Calu3 (cell line): ENCODE measurements at regions of chr2 and their contacts with region 1.

Region 1: DNA sequence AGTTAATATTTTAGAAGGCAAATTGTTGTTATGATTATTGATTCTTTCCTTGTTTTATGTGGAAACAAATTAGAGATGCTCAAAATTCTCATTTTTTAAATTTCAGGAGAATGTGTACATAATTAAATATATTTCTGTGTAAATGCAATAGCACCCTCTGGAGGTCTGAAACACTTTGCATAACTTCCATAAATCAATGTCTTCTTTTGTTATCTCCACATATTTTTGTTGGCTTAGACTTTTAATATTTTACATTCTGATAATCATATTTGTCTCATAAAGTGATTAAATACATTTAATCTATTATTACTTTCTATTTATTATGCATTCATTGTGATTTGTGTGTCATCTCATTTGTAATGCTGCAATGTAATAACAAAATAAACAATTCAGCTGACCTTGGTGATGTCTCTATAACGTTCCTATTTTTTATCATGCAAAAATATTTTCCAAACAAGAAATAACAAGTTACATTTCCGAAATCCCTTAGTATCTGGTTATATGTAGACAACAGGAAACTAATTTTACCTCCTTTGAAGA is 201.8 kb upstream of the GALNT5 start:
- DNase-seq: peak; percentile 5
- H3K4me3 Mint-ChIP-seq: no peak overlapping the region
- H3K27ac Mint-ChIP-seq: peak overlapping the region; percentile 45
- H3K4me1 Mint-ChIP-seq: peaks cover 23% of the 10 kb centered on the region
- H3K27me3 Mint-ChIP-seq: no peaks in the 10 kb centered on the region
- CTCF ChIP-seq: peak; percentile 45

Region 2: DNA sequence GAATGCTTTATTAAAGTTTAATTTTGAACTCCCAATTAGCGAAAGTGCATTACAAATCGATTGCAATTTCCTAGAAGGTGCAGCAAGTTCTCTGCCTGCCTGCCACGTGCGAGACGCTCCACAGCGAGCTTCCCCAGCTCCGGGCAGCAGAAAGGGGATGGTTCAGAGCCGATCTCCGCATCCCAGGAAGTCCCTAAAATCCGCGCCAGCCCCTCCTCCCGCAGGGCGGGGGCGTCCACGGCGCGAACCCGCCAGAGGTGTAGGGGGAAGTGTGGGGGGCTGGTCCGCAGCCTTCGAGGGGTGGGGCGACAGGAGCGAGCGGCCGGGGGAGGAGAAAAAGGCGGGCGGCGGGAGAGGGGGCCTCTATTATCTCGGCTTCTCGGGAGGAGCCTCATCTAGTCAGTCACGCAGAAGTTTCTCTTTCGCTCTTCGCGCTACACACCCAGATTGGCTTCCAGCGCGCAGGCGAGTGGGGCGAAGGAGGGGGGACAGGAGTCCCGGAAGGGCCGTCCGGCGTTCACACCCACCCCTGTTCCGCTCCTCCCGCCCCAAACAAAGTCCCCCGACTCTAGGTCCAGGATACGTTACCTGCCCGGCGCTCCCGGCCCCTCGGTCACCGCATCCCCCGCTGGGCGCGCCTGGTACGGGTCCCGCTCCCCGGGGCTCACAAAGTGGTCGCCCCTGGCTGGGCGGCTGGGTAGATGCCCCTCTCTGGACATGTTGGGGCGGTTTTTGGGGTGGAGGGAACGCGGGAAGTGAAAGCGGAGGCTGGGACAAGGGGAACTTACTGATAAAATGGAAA is 714.1 kb before region 1 on chr2:
- CTCF ChIA-PET with region 1: no interaction called
- intact Hi-C with region 1: loop called (anchors 2 kb)
- DNase-seq: peak; percentile 90
- H3K4me3 Mint-ChIP-seq: peak overlapping the region; percentile 94
- H3K27ac Mint-ChIP-seq: peak overlapping the region; percentile 95
- H3K4me1 Mint-ChIP-seq: peaks cover 35% of the 10 kb centered on the region
- H3K27me3 Mint-ChIP-seq: no peaks in the 10 kb centered on the region
- CTCF ChIP-seq: no peak

Region 3: DNA sequence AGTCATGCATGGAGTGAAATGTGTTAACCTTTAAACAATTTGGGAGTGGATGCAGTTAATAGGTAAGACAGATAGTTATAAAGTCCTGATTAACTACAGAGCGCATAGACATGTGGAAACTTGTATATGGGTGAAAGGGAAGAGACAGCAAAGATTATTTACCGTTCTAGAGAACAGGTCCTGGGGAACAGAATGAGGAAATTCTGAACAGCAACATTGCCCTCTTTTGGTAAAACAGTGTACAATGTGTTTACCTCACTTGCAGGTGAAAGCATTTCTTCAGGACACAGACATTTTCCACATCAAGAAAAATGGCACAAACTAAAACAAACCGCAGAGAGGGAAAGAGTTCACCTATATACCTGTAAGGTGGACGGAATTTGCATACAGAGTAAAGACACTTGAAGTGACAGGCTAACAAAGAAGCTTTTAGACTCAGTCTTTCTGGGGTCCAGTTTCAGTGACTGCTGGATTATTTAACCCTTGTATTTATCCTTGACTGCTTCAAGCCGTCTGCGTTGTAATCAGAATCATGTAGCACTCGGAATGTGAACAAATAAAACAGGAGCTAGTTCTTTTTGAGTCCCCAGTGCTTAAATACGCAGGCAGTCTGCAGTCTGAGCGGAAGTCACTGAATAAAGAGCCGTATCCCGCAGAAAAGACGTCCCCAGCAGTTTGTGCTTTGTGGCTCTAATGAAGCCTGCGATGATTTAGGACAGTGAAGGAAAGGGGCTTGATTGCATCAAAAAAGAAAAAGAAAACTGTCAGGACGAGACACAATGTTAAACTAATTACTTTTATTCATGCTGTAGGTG is 163.1 kb before region 1 on chr2:
- CTCF ChIA-PET with region 1: no interaction called
- intact Hi-C with region 1: loop called (anchors 1 kb)
- DNase-seq: peak; percentile 23
- H3K4me3 Mint-ChIP-seq: peak overlapping the region; percentile 67
- H3K27ac Mint-ChIP-seq: peak overlapping the region; percentile 29
- H3K4me1 Mint-ChIP-seq: peaks cover 20% of the 10 kb centered on the region
- H3K27me3 Mint-ChIP-seq: no peaks in the 10 kb centered on the region
- CTCF ChIP-seq: peak; percentile 18

Region 4: DNA sequence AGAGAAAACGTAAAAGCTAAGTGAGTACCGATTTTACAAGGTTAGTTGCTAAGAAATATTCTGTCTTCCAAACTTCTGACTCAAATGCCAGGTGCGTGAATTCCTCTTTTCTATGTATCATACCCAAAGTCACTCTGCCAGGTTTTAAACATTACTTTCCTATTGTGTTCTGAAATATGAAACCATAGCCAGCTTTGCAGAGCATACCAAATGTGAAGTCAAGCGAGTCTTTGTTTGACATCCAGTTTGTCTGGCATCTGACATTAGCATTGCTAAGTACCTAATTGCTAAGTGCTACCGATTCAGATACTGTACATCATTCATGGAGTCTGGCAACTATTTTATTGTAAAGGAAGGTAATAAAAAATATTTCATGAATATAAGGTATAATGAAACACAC is 120.1 kb before region 1 on chr2:
- CTCF ChIA-PET with region 1: no interaction called
- intact Hi-C with region 1: loop called (anchors 10 kb)
- DNase-seq: peak; percentile 28
- H3K4me3 Mint-ChIP-seq: no peak overlapping the region
- H3K27ac Mint-ChIP-seq: no peak overlapping the region
- H3K4me1 Mint-ChIP-seq: peaks cover 18% of the 10 kb centered on the region
- H3K27me3 Mint-ChIP-seq: no peaks in the 10 kb centered on the region
- CTCF ChIP-seq: no peak

Region 5: GRCh38 chr2:157194097-157194688 is 138.5 kb after region 1 on chr2:
- CTCF ChIA-PET with region 1: interaction called, 9 read pairs
- intact Hi-C with region 1: loop called (anchors 2 kb)
- DNase-seq: peak; percentile 28
- H3K4me3 Mint-ChIP-seq: no peak overlapping the region
- H3K27ac Mint-ChIP-seq: peak overlapping the region; percentile 77
- H3K4me1 Mint-ChIP-seq: peaks cover 16% of the 10 kb centered on the region
- H3K27me3 Mint-ChIP-seq: no peaks in the 10 kb centered on the region
- CTCF ChIP-seq: peak; percentile 41